ENCODE measurements at regions of chr14 and their contacts with region 1.

Region 1: GRCh38 chr14:75487155-75487671 is 35.1 kb upstream of the BATF start:
- DNase-seq: no peak
- ATAC-seq: peak; percentile 66
- H3K4me3 Mint-ChIP-seq: peak overlapping the region; percentile 9
- H3K27ac Mint-ChIP-seq: peak overlapping the region; percentile 42
- H3K4me1 Mint-ChIP-seq: peaks cover 22% of the 10 kb centered on the region
- H3K27me3 Mint-ChIP-seq: no peaks in the 10 kb centered on the region
- CTCF ChIP-seq: no peak

Region 2: GRCh38 chr14:75132382-75133086 is 354.7 kb before region 1 on chr14:
- CTCF ChIA-PET with region 1: interaction called, 7 read pairs
- POLR2A ChIA-PET with region 1: no interaction called
- intact Hi-C with region 1: loop called (anchors 1 kb)
- DNase-seq: no peak
- ATAC-seq: peak; percentile 87
- H3K4me3 Mint-ChIP-seq: no peak overlapping the region
- H3K27ac Mint-ChIP-seq: no peak overlapping the region
- H3K4me1 Mint-ChIP-seq: peaks cover 16% of the 10 kb centered on the region
- H3K27me3 Mint-ChIP-seq: no peaks in the 10 kb centered on the region
- CTCF ChIP-seq: peak; percentile 51

Region 3: DNA sequence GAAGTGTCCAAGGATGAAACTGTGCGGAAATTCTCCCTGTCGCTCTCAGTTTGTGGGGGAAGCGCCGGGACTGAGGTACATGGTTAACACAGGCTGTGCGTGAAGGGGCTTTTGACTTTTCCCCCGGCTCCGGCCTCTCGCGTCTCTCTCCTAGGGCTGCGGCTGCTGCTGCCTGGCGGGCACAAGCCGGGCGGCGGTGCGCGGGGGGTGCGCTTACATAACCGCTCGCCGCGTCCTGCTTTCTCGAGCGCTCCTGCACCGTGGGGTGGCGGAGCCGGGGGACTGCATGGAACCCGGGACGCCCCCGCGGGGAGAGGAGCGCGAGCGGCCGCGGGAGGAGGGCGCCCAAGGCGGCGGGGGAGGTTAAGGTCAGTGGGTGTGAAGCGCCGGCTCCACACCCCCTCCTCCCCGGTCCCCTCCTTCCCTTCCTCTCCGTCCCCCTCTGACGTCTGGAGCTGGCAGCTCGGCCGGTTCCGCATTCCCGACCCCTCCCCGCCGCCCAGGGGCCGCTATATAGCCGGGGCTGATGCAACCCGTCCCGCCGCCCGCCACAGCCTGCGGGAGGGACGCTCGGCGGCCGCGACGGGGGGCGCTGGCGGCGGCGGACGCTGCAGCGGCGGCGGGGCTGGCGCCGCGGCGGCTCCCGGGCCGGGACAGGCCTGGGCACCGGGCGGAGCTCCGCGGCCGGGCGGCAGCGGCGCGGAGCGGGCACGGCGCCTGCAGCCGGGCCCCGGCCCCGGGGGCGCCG is 59.6 kb before region 1 on chr14 and contains the start of gene JDP2:
- CTCF ChIA-PET with region 1: no interaction called
- POLR2A ChIA-PET with region 1: interaction called, 4 read pairs
- intact Hi-C with region 1: loop called (anchors 5 kb)
- DNase-seq: peak; percentile 57
- ATAC-seq: peak; percentile 53
- H3K4me3 Mint-ChIP-seq: peak within 1 kb of the TSS; percentile 88
- H3K27ac Mint-ChIP-seq: peak within 1 kb of the TSS; percentile 96
- H3K4me1 Mint-ChIP-seq: peaks cover 37% of the 10 kb centered on the region
- H3K27me3 Mint-ChIP-seq: no peaks in the 10 kb centered on the region
- CTCF ChIP-seq: no peak
- total RNA-seq, gene JDP2: 21.2 and 21.8 TPM in 2 replicates

Region 4: GRCh38 chr14:75452900-75453747 is 34.1 kb before region 1 on chr14:
- CTCF ChIA-PET with region 1: interaction called, 3 read pairs
- POLR2A ChIA-PET with region 1: no interaction called
- intact Hi-C with region 1: loop called (anchors 5 kb)
- DNase-seq: no peak
- ATAC-seq: no peak
- H3K4me3 Mint-ChIP-seq: no peak overlapping the region
- H3K27ac Mint-ChIP-seq: no peak overlapping the region
- H3K4me1 Mint-ChIP-seq: peaks cover 4% of the 10 kb centered on the region
- H3K27me3 Mint-ChIP-seq: no peaks in the 10 kb centered on the region
- CTCF ChIP-seq: no peak

Region 5: DNA sequence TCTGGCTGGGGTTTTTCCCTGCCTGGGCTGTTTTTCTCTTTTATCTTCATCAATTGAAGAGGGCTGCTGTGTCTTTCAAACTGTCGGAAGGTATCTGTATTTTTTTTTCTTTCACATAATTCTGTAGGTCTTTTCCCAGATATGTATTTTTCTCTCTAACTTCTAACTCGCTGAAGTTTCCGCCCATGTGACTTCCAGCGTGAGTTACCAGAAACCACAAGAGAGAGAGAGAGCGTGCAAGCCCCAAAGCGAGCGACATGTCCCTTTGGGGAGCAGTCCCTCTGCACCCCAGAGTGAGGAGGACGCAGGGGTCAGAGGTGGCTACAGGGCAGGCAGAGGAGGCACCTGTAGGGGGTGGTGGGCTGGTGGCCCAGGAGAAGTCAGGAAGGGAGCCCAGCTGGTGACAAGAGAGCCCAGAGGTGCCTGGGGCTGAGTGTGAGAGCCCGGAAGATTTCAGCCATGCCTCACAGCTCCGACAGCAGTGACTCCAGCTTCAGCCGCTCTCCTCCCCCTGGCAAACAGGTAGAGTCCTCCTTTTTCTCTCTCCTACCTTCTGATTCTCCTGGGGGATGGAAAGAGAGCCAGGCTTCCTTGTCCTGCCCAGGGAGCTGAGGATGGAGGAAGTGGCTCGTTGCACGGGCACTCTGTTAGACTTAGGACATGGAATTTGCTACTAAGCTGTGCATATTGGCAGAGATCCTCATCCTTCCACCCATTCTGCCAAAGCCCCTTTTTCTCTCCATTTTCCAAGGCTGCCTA is 35.2 kb after region 1 on chr14 and contains the start of gene BATF:
- CTCF ChIA-PET with region 1: interaction called, 12 read pairs
- POLR2A ChIA-PET with region 1: interaction called, 132 read pairs
- intact Hi-C with region 1: no loop called
- DNase-seq: peak; percentile 58
- ATAC-seq: peak; percentile 70
- H3K4me3 Mint-ChIP-seq: peak within 1 kb of the TSS; percentile 100
- H3K27ac Mint-ChIP-seq: peak within 1 kb of the TSS; percentile 98
- H3K4me1 Mint-ChIP-seq: peaks cover 85% of the 10 kb centered on the region
- H3K27me3 Mint-ChIP-seq: no peaks in the 10 kb centered on the region
- CTCF ChIP-seq: no peak
- total RNA-seq, gene BATF: 160 and 171 TPM in 2 replicates

Region 6: DNA sequence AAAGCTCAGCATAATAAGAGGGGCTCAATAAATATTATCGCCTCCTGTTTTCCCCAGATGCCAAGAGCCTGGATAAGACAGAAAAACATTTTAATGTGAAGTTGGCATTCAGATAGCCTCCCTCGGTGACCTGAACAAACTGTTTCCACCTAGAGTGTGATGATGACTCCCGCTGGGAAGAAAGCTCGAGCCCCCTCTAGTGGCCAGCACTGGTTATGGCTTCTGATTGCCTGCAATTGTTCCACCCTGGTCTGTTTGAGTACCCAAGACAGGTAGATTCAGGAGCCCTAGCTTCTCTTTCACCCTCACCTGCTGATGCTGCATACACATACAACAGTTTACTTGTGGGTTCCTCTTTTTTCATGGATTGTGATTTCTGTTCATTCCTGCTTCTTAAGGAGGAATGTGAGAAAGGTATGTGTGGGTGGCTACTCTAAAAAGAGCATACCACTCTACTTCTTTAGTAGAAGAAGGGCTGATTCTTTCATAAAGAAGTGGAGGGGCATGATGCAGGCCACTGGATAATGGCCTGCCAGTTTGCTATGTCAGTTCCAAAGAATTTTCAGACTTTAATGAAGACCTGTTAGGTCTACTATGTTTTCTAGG is 167.0 kb after region 1 on chr14:
- CTCF ChIA-PET with region 1: interaction called, 10 read pairs
- POLR2A ChIA-PET with region 1: no interaction called
- intact Hi-C with region 1: loop called (anchors 1 kb)
- DNase-seq: peak; percentile 72
- ATAC-seq: peak; percentile 96
- H3K4me3 Mint-ChIP-seq: no peak overlapping the region
- H3K27ac Mint-ChIP-seq: no peak overlapping the region
- H3K4me1 Mint-ChIP-seq: peaks cover 1% of the 10 kb centered on the region
- H3K27me3 Mint-ChIP-seq: no peaks in the 10 kb centered on the region
- CTCF ChIP-seq: peak; percentile 87

Measured in activated B cell treated with CpG ODN at 0.5 μM for 24 hours (primary cell).